Naive thymus-derived CD4-positive, alpha-beta T cell (primary cell): ENCODE measurements at regions of chr14 and their contacts with region 1.

Region 1: DNA sequence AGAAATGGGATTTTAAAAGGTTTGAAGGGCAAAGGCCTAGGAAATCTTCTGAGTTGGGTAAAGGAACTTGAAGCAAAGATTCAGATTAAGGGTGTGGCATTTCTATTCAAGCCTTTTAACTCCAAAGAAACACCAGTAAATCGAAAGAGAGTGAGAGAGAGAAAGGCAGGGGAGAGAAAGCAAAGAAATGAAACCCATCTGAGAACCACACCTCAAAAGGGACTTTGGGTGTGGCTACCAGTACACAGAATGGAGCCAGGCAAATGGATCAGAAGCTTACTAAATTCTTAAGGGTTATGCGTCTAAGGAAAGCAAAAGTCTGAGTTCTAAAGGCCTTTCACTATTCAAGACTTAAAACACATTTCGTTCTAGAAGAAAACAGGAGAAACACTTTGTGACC is 277.4 kb downstream of the BCL11B start:
- DNase-seq: peak in 6 of 9 donors; percentile 12 to 58 (median 40)
- ATAC-seq: peak; percentile 60
- H3K4me3 ChIP-seq: no peak overlapping the region
- H3K4me3 Mint-ChIP-seq: peak overlapping the region; percentile 52 to 85 (median 74)
- H3K27ac ChIP-seq: peak overlapping the region; percentile 62
- H3K27ac Mint-ChIP-seq: peak overlapping the region; percentile 85 to 98 (median 91)
- H3K4me1 ChIP-seq: peaks cover 9 to 20% of the 10 kb centered on the region in 2 donors
- H3K4me1 Mint-ChIP-seq: peaks cover 18 to 47% (median 29%) of the 10 kb centered on the region in 7 donors
- H3K27me3 ChIP-seq: no peaks in the 10 kb centered on the region
- H3K27me3 Mint-ChIP-seq: no peaks in the 10 kb centered on the region

Region 2: GRCh38 chr14:98974082-98974481 is 20.5 kb before region 1 on chr14:
- CTCF ChIA-PET with region 1: no interaction called
- POLR2A ChIA-PET with region 1: no interaction called
- intact Hi-C with region 1: loop called in 1 of 2 experiments (anchors 2 kb)
- DNase-seq: no peak
- ATAC-seq: no peak
- H3K4me3 ChIP-seq: no peak overlapping the region
- H3K4me3 Mint-ChIP-seq: no peak overlapping the region
- H3K27ac ChIP-seq: no peak overlapping the region
- H3K27ac Mint-ChIP-seq: peak overlapping the region in 2 of 9 donors; percentile 15 to 55
- H3K4me1 ChIP-seq: no peaks in the 10 kb centered on the region
- H3K4me1 Mint-ChIP-seq: peaks cover 0 to 15% (median 0%) of the 10 kb centered on the region in 7 donors
- H3K27me3 ChIP-seq: no peaks in the 10 kb centered on the region
- H3K27me3 Mint-ChIP-seq: peaks cover 0 to 20% (median 0%) of the 10 kb centered on the region in 5 donors